Motor neuron (in vitro differentiated cells): ENCODE measurements at regions of chr18 and their contacts with region 1.

Region 1: GRCh38 chr18:32158108-32158624 is 31.7 kb upstream of the MEP1B start:
- ATAC-seq: peak; percentile 98 to 100 (median 100)
- H3K4me3 ChIP-seq: peak overlapping the region; percentile 8 to 30 (median 16)
- H3K27ac ChIP-seq: no peak overlapping the region
- H3K4me1 ChIP-seq: no peaks in the 10 kb centered on the region

Region 2: GRCh38 chr18:32048507-32049091 is 109.6 kb before region 1 on chr18:
- in situ Hi-C with region 1: no loop called
- ATAC-seq: peak in 3 of 8 experiments; percentile 16 to 85 (median 78)
- H3K4me3 ChIP-seq: no peak overlapping the region
- H3K27ac ChIP-seq: no peak overlapping the region
- H3K4me1 ChIP-seq: no peaks in the 10 kb centered on the region

Region 3: DNA sequence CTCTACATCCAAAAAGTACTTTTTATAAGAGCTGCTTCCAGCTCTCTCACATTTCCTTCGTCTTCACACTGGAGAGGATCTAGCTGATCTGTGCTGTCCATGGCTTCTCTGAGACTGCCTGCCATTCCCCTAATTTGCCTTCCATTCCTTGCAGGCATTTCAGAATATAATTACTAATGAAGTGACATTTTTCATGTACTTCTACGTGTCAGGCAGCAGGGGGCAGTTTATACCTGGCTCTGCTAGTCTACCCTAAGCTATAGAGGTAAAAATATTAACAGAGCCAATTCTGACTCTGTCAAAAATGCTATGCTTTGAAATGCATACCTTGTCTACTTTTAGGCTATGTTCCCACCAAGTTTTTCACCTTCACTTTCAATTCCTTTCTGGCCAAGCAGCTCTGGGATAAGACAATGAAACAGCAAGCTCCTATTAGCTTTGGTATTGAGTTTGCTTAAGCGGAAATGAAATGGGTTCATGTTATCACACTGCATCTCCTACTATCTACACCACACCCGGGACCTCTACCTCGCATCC is 113.6 kb after region 1 on chr18:
- in situ Hi-C with region 1: loop called in 1 of 9 experiments (anchors 25 kb)
- ATAC-seq: peak in 6 of 8 experiments; percentile 32 to 91 (median 72)
- H3K4me3 ChIP-seq: no peak overlapping the region
- H3K27ac ChIP-seq: no peak overlapping the region
- H3K4me1 ChIP-seq: no peaks in the 10 kb centered on the region

Region 4: DNA sequence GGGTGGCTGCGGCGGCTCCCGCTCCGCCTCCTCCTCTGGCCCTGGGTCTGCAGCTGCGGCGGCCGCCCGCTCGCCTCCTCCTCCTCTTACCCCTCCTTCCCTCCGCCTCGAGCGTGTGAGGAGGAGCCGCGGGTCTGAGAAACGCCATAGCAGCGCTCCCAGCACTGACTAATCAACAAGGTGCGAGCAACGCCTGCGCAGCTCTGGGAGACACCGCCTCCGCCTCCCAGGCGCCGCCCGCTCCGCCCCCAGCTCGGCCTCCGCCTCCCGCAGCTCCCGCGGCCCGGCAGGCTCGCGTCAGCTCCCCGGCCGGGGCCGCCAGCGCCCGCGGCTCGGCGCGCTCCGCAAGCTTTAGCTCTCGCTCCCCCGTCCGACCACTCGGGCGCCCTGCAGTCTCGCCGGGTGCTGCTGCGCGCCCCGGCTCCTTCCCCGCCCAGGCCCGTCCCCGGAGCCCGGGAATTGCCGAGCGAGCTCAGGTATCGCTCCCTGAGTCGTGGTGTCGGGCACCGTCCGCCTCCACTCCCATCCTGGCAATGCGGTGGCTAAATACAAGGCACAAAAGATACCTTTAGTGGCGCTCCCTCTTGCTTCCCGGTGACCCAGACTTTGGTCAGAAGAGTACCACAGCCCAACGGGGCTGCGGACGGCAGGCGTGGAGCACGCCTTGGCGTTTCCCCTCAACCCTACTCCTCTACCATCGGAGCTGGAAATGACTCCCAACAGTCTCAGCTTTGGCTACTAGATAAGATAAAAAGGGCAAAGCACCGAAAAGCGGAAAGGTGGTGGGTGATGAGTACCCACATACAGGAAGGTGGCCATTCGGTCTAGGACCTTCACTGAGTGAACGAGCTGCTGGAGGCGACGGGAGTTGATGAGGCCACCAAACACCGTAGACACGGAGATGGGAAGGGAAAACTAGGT is 312.8 kb after region 1 on chr18 and contains the start of gene GAREM1:
- in situ Hi-C with region 1: loop called in 1 of 9 experiments (anchors 25 kb)
- ATAC-seq: peak; percentile 88 to 94 (median 91)
- H3K4me3 ChIP-seq: peak within 1 kb of the TSS; percentile 45 to 73 (median 58)
- H3K27ac ChIP-seq: peak within 1 kb of the TSS; percentile 79 to 84
- H3K4me1 ChIP-seq: peaks cover 2 to 3% of the 10 kb centered on the region in 2 donors
- total RNA-seq, gene GAREM1: 1.3 to 17.7 (median 3.6) TPM